ENCODE measurements at regions of chr1 and their contacts with region 1.

Region 1: GRCh38 chr1:21956720-21957552 is 19.8 kb upstream of the HSPG2 start:
- DNase-seq: peak; percentile 80 to 94 (median 91)
- ATAC-seq: peak; percentile 90 to 92 (median 91)
- H3K4me3 ChIP-seq: peak overlapping the region in 2 of 4 donors; percentile 10 to 26
- H3K27ac ChIP-seq: peak overlapping the region; percentile 54 to 86 (median 71)
- H3K4me1 ChIP-seq: peaks cover 11 to 15% (median 13%) of the 10 kb centered on the region in 3 donors
- H3K27me3 ChIP-seq: no peaks in the 10 kb centered on the region
- CTCF ChIP-seq: no peak

Region 2: GRCh38 chr1:21822349-21822748 is 134.6 kb before region 1 on chr1:
- intact Hi-C with region 1: no loop called
- DNase-seq: peak in 1 of 6 donors; percentile 44
- ATAC-seq: no peak
- H3K4me3 ChIP-seq: no peak overlapping the region
- H3K27ac ChIP-seq: no peak overlapping the region
- H3K4me1 ChIP-seq: no peaks in the 10 kb centered on the region
- H3K27me3 ChIP-seq: no peaks in the 10 kb centered on the region
- CTCF ChIP-seq: no peak

Region 3: GRCh38 chr1:21909787-21910503 is 47.0 kb before region 1 on chr1:
- intact Hi-C with region 1: loop called in 1 of 3 experiments (anchors 10 kb)
- DNase-seq: no peak
- ATAC-seq: peak in 2 of 4 donors; percentile 6 to 13
- H3K4me3 ChIP-seq: no peak overlapping the region
- H3K27ac ChIP-seq: peak overlapping the region in 2 of 4 donors; percentile 42 to 48
- H3K4me1 ChIP-seq: peaks cover 8 to 17% (median 9%) of the 10 kb centered on the region in 3 donors
- H3K27me3 ChIP-seq: no peaks in the 10 kb centered on the region
- CTCF ChIP-seq: no peak